ENCODE measurements at regions of chr17 and their contacts with region 1.

Region 1: GRCh38 chr17:10316801-10317542 is 55.8 kb downstream of the MYH13 start:
- DNase-seq: peak; percentile 45 to 68 (median 68)
- ATAC-seq: peak in 2 of 4 donors; percentile 63 to 72
- H3K4me3 ChIP-seq: no peak overlapping the region
- H3K27ac ChIP-seq: no peak overlapping the region
- H3K4me1 ChIP-seq: peaks cover 0 to 11% (median 0%) of the 10 kb centered on the region in 12 donors
- H3K27me3 ChIP-seq: peaks cover 0 to 3% (median 0%) of the 10 kb centered on the region in 9 donors
- CTCF ChIP-seq: peak; percentile 22 to 75 (median 52)
- POLR2A ChIP-seq: no peak

Region 2: GRCh38 chr17:10243883-10244844 is 72.8 kb before region 1 on chr17:
- intact Hi-C with region 1: loop called in 1 of 10 experiments (anchors 10 kb)
- DNase-seq: peak in 2 of 5 donors; percentile 27 to 33
- ATAC-seq: peak in 3 of 4 donors; percentile 37 to 88 (median 70)
- H3K4me3 ChIP-seq: no peak overlapping the region
- H3K27ac ChIP-seq: no peak overlapping the region
- H3K4me1 ChIP-seq: no peaks in the 10 kb centered on the region
- H3K27me3 ChIP-seq: peaks cover 0 to 3% (median 0%) of the 10 kb centered on the region in 9 donors
- CTCF ChIP-seq: no peak
- POLR2A ChIP-seq: no peak

Region 3: GRCh38 chr17:10251212-10251948 is 65.6 kb before region 1 on chr17:
- intact Hi-C with region 1: loop called in 2 of 10 experiments (anchors 10 kb)
- DNase-seq: no peak
- ATAC-seq: no peak
- H3K4me3 ChIP-seq: no peak overlapping the region
- H3K27ac ChIP-seq: no peak overlapping the region
- H3K4me1 ChIP-seq: peaks cover 0 to 6% (median 0%) of the 10 kb centered on the region in 12 donors
- H3K27me3 ChIP-seq: peaks cover 0 to 4% (median 0%) of the 10 kb centered on the region in 9 donors
- CTCF ChIP-seq: no peak
- POLR2A ChIP-seq: no peak

Region 4: DNA sequence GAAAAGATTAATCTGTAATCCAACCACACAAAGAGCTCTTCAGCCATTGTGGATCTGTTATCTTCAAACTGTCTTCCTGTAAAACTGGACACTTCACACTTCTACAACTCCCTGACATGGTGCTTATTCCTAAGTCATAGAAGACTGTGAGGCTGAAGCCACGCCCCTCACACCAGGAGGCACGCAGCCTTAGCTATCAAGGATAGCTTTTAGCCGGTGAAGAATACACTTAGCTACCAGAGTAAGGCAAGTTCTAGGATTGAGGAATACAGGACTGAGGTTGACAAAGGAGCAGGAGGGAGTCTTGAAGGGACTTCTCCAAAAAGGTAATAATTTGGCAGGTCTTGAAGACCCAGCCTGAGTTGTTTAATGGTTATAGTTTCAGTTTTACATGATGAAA is 38.8 kb before region 1 on chr17:
- intact Hi-C with region 1: no loop called
- DNase-seq: no peak
- ATAC-seq: no peak
- H3K4me3 ChIP-seq: peak overlapping the region in 6 of 12 donors; percentile 13 to 35 (median 24)
- H3K27ac ChIP-seq: no peak overlapping the region
- H3K4me1 ChIP-seq: peaks cover 0 to 3% (median 0%) of the 10 kb centered on the region in 12 donors
- H3K27me3 ChIP-seq: peaks cover 0 to 3% (median 0%) of the 10 kb centered on the region in 9 donors
- CTCF ChIP-seq: no peak
- POLR2A ChIP-seq: no peak

Measured in heart left ventricle (tissue), 16 donors.